Left colon (tissue), 2 donors: ENCODE measurements at regions of chr3 and their contacts with region 1.

Region 1: GRCh38 chr3:88936831-88937230 is 170.6 kb upstream of the EPHA3 start:
- DNase-seq: no peak
- ATAC-seq: no peak

Region 2: GRCh38 chr3:88369337-88369736 is 567.5 kb before region 1 on chr3:
- intact Hi-C with region 1: no loop called
- DNase-seq: no peak
- ATAC-seq: no peak

Region 3: GRCh38 chr3:88542916-88543315 is 393.9 kb before region 1 on chr3:
- intact Hi-C with region 1: no loop called
- DNase-seq: no peak
- ATAC-seq: no peak

Region 4: GRCh38 chr3:88807491-88808100 is 129.2 kb before region 1 on chr3:
- intact Hi-C with region 1: loop called in 1 of 2 experiments (anchors 5 kb)
- DNase-seq: no peak
- ATAC-seq: no peak

Region 5: GRCh38 chr3:88986834-88987233 is 50.0 kb after region 1 on chr3:
- intact Hi-C with region 1: no loop called
- DNase-seq: no peak
- ATAC-seq: no peak

Region 6: GRCh38 chr3:89138048-89138447 is 201.2 kb after region 1 on chr3:
- intact Hi-C with region 1: no loop called
- DNase-seq: no peak
- ATAC-seq: no peak